Activated CD4-positive, alpha-beta T cell treated with anti-CD3 and anti-CD28 coated beads for 36 hours (primary cell): ENCODE measurements at regions of chr2 and their contacts with region 1.

Region 1: GRCh38 chr2:26846328-26847306 is 1.3 kb upstream of the DPYSL5 start:
- DNase-seq: peak; percentile 80
- ATAC-seq: peak; percentile 75
- H3K4me3 Mint-ChIP-seq: peak overlapping the region; percentile 36
- H3K27ac Mint-ChIP-seq: no peak overlapping the region
- H3K4me1 Mint-ChIP-seq: peaks cover 11% of the 10 kb centered on the region
- H3K27me3 Mint-ChIP-seq: peaks cover 42% of the 10 kb centered on the region

Region 2: GRCh38 chr2:25602333-25602723 is 1244.3 kb before region 1 on chr2:
- CTCF ChIA-PET with region 1: no interaction called
- POLR2A ChIA-PET with region 1: no interaction called
- intact Hi-C with region 1: no loop called
- DNase-seq: no peak
- ATAC-seq: peak; percentile 54
- H3K4me3 Mint-ChIP-seq: no peak overlapping the region
- H3K27ac Mint-ChIP-seq: no peak overlapping the region
- H3K4me1 Mint-ChIP-seq: peaks cover 17% of the 10 kb centered on the region
- H3K27me3 Mint-ChIP-seq: no peaks in the 10 kb centered on the region

Region 3: GRCh38 chr2:25726522-25726921 is 1120.1 kb before region 1 on chr2:
- CTCF ChIA-PET with region 1: no interaction called
- POLR2A ChIA-PET with region 1: no interaction called
- intact Hi-C with region 1: no loop called
- DNase-seq: no peak
- ATAC-seq: peak; percentile 49
- H3K4me3 Mint-ChIP-seq: no peak overlapping the region
- H3K27ac Mint-ChIP-seq: no peak overlapping the region
- H3K4me1 Mint-ChIP-seq: peaks cover 2% of the 10 kb centered on the region
- H3K27me3 Mint-ChIP-seq: no peaks in the 10 kb centered on the region

Region 4: DNA sequence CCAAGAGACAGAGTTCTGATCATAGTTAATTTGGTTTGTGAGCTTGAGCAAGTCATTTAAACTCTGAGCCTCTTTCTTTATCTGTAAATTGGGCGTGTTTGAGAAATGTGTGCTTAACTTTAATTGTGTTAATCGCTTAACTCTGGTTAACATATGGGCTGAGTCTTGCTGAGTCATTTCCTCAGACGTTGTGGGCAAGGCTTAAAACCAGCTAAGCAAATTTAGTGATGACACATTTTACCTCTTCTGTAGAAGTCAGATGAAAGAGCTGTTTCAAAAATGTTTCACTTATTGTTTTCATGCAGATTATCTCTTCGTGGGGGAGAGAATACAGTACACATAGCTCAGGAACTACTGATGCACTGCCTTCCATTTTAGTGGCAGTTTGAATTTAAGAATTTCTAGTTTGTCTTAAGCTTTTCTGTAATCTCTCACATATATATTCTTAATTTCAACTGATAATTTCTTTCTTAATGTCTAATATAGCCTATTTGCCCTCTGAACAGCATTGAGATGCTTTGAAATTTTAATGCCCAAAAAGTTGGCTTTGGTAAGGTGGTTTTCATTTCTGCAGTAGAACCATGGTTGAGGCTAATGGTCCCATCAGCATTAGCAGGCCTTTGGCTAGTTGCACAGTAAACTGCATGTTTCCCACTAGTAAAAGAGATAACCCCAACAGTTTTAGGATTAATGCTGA is 777.9 kb before region 1 on chr2:
- CTCF ChIA-PET with region 1: no interaction called
- POLR2A ChIA-PET with region 1: no interaction called
- intact Hi-C with region 1: no loop called
- DNase-seq: peak; percentile 73
- ATAC-seq: peak; percentile 96
- H3K4me3 Mint-ChIP-seq: peak overlapping the region; percentile 41
- H3K27ac Mint-ChIP-seq: peak overlapping the region; percentile 89
- H3K4me1 Mint-ChIP-seq: peaks cover 58% of the 10 kb centered on the region
- H3K27me3 Mint-ChIP-seq: no peaks in the 10 kb centered on the region

Region 5: DNA sequence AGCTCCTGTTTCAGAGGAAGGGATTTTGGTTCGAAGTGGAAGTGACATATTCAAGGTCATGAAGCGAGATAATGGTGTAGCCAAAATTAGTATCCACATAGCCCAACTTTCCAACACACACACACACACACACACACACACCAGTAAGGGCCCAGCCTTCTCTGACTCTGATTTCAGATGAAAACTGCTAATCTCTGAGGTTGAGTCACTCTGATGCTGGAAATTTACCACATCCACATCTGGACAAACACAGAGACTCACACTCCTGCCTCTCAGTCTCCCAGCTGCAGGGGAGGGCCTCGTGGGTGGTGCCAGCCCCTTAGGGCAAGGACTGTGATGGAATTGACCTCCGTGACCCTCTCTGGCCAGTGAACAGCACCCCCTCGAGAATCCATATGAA is 111.5 kb before region 1 on chr2:
- CTCF ChIA-PET with region 1: no interaction called
- POLR2A ChIA-PET with region 1: no interaction called
- intact Hi-C with region 1: no loop called
- DNase-seq: no peak
- ATAC-seq: peak; percentile 6
- H3K4me3 Mint-ChIP-seq: no peak overlapping the region
- H3K27ac Mint-ChIP-seq: no peak overlapping the region
- H3K4me1 Mint-ChIP-seq: no peaks in the 10 kb centered on the region
- H3K27me3 Mint-ChIP-seq: peaks cover 3% of the 10 kb centered on the region

Region 6: DNA sequence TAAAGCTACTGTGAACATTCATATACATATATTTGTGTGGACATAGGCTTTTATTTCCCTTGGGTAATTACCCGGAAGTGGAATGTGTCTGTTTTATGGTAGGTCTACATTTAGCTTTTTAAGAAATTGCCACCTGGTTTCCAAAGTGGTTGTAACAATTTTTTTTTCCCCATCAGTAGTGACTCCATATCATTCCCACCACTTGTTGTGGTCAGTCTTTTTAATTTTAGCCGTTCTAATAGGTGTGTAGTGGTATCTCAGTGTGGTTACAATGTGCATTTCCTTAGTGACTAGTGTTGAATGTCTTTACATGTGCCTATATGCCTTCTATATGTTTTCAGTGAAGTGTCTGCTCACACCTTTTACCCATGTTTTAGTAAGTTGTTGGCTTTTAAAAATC is 63.6 kb after region 1 on chr2:
- CTCF ChIA-PET with region 1: interaction called, 11 read pairs
- POLR2A ChIA-PET with region 1: no interaction called
- intact Hi-C with region 1: no loop called
- DNase-seq: no peak
- ATAC-seq: no peak
- H3K4me3 Mint-ChIP-seq: no peak overlapping the region
- H3K27ac Mint-ChIP-seq: no peak overlapping the region
- H3K4me1 Mint-ChIP-seq: no peaks in the 10 kb centered on the region
- H3K27me3 Mint-ChIP-seq: peaks cover 12% of the 10 kb centered on the region

Region 7: GRCh38 chr2:26932974-26933373 is 86.4 kb after region 1 on chr2:
- CTCF ChIA-PET with region 1: interaction called, 13 read pairs
- POLR2A ChIA-PET with region 1: no interaction called
- intact Hi-C with region 1: no loop called
- DNase-seq: no peak
- ATAC-seq: no peak
- H3K4me3 Mint-ChIP-seq: no peak overlapping the region
- H3K27ac Mint-ChIP-seq: no peak overlapping the region
- H3K4me1 Mint-ChIP-seq: no peaks in the 10 kb centered on the region
- H3K27me3 Mint-ChIP-seq: peaks cover 5% of the 10 kb centered on the region

Region 8: DNA sequence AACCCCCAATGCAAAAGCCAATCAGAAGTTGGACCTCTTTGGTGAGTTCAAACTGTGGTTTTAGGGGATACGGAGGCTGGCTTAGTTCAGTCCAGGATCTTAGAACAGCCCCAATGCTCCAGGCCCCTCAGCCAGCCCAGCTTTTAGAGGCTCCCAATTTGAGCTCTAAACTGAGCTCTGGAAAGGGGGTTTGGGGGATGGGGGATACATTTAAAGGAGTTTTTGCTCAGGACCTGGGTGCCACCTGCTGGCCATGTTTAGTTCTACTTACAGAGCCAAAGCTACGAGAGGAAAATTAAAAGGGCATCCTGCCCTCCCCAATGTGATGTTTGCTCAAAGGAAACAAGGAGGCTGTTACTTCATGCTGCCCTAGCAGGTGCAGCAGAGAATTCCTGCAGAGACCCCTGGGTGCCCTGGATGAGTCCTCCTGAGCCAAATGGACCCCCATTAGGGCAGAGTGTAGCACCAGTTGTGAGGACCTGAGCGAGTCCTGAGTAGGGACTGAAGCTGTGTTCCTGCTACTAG is 170.2 kb after region 1 on chr2:
- CTCF ChIA-PET with region 1: interaction called, 16 read pairs
- POLR2A ChIA-PET with region 1: no interaction called
- intact Hi-C with region 1: loop called (anchors 2 kb)
- DNase-seq: peak; percentile 69
- ATAC-seq: peak; percentile 55
- H3K4me3 Mint-ChIP-seq: no peak overlapping the region
- H3K27ac Mint-ChIP-seq: no peak overlapping the region
- H3K4me1 Mint-ChIP-seq: no peaks in the 10 kb centered on the region
- H3K27me3 Mint-ChIP-seq: no peaks in the 10 kb centered on the region

Region 9: DNA sequence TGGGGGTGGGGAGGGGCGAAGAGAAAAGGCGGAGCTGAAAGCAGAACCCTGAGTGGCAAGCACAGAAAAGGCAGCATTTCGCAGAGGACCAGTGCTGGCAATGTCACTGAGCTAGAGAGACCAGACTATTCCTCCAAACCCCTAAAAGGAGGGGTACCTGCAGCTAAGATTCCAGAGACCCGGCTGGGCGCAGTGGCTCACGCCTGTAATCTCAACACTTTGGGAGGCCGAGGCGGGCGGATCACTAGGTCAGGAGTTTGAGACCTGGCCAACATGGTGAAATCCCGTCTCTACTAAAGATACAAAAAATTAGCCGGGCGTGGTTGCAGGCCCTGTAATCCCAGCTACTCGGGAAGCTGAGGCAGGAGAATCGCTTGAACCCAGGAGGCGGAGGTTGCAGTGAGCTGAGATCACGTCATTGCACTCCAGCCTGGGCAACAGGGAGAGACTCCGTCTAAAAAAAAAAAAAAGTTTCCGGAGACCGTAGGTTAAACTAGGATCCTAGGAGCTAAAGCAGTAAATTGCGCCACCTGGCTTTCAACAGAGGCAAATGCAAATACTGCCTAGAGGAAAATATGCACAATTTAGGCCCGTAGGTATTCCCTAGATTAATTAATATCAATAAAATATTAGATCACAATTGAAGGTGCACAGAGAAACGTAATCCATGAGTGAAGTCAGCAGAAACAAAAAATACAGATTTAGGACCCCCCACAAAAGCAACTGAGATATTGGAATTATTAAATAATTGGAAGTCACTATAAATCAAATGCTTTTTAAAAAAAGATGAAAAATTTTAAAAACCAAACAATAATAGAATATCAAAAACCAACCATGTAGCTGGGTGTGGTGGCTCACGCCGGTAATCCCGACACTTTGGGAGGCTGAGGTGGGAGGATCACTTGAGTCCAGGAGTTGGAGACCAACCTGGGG is 456.7 kb after region 1 on chr2:
- CTCF ChIA-PET with region 1: interaction called, 7 read pairs
- POLR2A ChIA-PET with region 1: no interaction called
- intact Hi-C with region 1: loop called in 1 of 2 experiments (anchors 10 kb)
- DNase-seq: peak; percentile 67
- ATAC-seq: peak; percentile 78
- H3K4me3 Mint-ChIP-seq: peak overlapping the region; percentile 56
- H3K27ac Mint-ChIP-seq: peak overlapping the region; percentile 24
- H3K4me1 Mint-ChIP-seq: peaks cover 5% of the 10 kb centered on the region
- H3K27me3 Mint-ChIP-seq: peaks cover 10% of the 10 kb centered on the region